IMR-90 (cell line): ENCODE measurements at regions of chr15 and their contacts with region 1.

Region 1: GRCh38 chr15:48352474-48353072 is 21.3 kb downstream of the DUT start:
- DNase-seq: peak; percentile 69
- ATAC-seq: peak; percentile 87
- H3K4me3 ChIP-seq: no peak overlapping the region
- H3K27ac ChIP-seq: no peak overlapping the region
- H3K4me1 ChIP-seq: peaks cover 6% of the 10 kb centered on the region
- H3K27me3 ChIP-seq: no peaks in the 10 kb centered on the region
- CTCF ChIP-seq: peak; percentile 70
- POLR2A ChIP-seq: no peak
- RAD21 ChIP-seq: peak; percentile 59

Region 2: GRCh38 chr15:48340111-48340510 is 12.5 kb before region 1 on chr15:
- CTCF ChIA-PET with region 1: interaction called, 13 read pairs
- POLR2A ChIA-PET with region 1: no interaction called
- dilution Hi-C with region 1: no loop called
- in situ Hi-C with region 1: no loop called
- intact Hi-C with region 1: no loop called
- DNase-seq: no peak
- ATAC-seq: no peak
- H3K4me3 ChIP-seq: no peak overlapping the region
- H3K27ac ChIP-seq: no peak overlapping the region
- H3K4me1 ChIP-seq: no peaks in the 10 kb centered on the region
- H3K27me3 ChIP-seq: no peaks in the 10 kb centered on the region
- CTCF ChIP-seq: no peak
- POLR2A ChIP-seq: no peak
- RAD21 ChIP-seq: no peak

Region 3: DNA sequence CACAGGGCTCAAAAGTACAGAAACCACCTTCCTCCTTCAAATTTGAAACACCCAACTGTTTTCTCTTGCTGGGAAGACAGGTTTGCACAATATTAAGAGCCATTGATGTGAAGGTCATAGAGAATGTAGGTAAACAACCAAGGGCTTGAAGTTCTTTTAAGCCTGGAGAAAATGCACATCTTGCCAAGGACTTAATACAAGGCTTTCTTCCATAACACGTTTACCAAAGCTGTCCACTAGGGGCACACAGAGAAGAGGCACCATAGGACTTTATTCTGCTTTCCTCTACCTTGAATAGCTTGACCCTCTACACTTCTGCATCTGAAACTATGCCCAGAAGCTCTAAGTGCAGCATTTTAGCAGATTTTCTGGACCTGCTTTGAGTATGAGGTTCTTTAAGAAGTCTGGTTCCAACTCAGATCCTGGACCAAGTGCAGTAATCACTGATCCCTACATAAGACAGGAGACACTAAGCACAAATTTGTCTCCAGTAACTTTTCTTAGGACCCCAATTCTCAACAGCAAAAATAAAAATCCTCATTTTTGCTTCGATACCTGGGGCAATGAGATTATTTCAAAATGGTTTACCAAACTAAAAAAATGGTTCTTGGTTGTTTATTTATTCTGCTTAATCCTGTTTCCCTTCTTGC is 155.0 kb after region 1 on chr15:
- CTCF ChIA-PET with region 1: no interaction called
- POLR2A ChIA-PET with region 1: no interaction called
- dilution Hi-C with region 1: no loop called
- in situ Hi-C with region 1: no loop called
- intact Hi-C with region 1: loop called (anchors 10 kb)
- DNase-seq: peak; percentile 60
- ATAC-seq: peak; percentile 80
- H3K4me3 ChIP-seq: no peak overlapping the region
- H3K27ac ChIP-seq: no peak overlapping the region
- H3K4me1 ChIP-seq: no peaks in the 10 kb centered on the region
- H3K27me3 ChIP-seq: no peaks in the 10 kb centered on the region
- CTCF ChIP-seq: peak; percentile 55
- POLR2A ChIP-seq: no peak
- RAD21 ChIP-seq: peak; percentile 54